GM18951 (cell line): ENCODE measurements at regions of chr11 and their contacts with region 1.

Region 1: GRCh38 chr11:44609001-44609782 is 43.7 kb downstream of the CD82 start:
- POLR2A ChIP-seq: peak; percentile 27

Region 2: GRCh38 chr11:44574610-44575287 is 34.4 kb before region 1 on chr11:
- in situ Hi-C with region 1: loop called (anchors 5 kb)
- POLR2A ChIP-seq: no peak

Region 3: DNA sequence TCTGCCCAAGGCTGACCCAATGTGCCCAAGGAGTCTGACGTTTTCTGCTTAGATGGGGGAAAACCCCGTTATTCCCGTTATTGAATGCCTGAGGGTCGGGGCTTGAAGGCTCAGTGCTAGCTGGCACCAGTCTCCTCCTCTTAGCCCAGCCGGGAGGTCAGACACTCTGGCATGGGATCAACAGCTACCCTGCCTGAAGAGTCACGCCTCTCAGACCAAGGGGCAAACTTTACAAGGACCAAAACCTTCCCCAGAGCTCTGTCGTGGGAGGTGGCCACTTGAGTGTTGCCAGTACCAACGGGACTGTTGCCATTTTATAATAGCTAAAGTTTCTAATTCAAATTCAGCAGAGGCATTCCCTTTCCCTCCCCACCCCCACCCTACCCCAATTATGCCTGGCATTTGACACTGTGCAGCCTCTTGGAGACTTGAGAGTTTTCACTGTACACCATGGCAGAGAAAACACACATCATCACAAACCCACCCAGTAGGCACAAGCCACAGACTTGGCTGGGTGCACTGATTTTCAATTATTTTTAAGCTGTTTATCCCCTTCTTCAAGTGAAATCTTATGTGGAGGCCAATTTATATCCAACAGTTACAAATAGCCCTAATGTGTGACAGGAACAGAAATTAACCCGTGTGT is 814.4 kb after region 1 on chr11:
- in situ Hi-C with region 1: no loop called
- POLR2A ChIP-seq: no peak